MCF 10A (cell line): ENCODE measurements at regions of chr6 and their contacts with region 1.

Region 1: DNA sequence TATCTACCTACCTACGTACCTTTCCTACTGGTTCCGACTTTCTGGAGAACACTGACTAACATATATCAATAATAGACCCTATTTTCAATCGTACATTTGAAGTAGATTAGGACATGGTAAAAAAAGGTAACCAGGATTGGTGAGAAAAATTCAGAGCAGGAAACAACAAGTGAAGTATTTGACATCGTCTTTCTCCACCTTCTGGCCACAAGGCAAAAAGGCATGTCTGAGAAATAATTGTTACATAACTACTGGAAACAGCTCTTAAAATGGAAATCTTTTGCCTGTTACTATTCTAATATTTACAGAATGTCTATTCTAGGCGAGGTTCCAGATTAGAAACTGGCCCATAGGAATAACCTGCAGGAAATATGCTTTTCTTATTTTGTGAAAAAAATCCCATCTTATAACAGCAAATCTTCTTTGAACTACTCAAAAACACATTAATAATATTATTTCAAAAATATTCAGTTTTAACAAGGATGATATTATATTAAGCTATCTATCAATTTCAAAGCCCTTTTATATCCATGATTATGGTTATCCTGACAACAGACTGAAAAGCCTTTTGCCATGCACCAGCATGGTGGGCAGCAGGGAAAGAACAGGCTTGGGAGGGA is 80.8 kb downstream of the RCAN2 start:
- DNase-seq: peak; percentile 54
- H3K4me3 Mint-ChIP-seq: no peak overlapping the region
- H3K27ac Mint-ChIP-seq: no peak overlapping the region
- H3K4me1 Mint-ChIP-seq: no peaks in the 10 kb centered on the region
- H3K27me3 Mint-ChIP-seq: peaks cover 8% of the 10 kb centered on the region
- CTCF ChIP-seq: peak; percentile 75

Region 2: DNA sequence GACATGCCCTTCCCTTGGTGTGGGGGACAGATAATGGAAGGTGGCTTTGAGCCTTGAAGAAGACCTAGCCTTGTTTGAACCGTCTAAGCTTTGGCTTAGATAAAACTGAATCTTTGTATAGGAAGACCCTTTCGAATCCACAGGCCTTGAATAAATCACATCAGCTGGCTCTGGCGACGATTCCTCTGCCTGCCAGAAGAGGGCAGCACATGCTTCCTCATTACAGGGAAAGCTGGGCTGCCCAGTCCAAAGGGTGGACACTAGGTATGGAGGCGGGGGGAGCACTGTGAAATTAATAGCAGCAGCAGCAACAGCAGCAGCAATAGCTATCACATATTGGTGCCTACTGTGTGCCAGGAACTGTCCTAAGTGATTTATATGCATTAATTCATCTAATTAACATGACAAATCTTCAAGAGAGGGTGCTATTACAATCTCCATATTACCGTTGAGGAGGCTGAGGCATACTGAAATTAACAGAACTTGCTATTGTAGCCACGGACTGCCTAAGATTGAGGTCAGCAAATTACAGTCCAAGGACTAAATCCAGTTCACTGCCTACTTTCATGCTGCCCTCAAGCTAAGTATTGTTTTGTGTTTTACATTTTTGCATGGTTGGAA is 479.9 kb before region 1 on chr6:
- CTCF ChIA-PET with region 1: interaction called, 31 read pairs
- POLR2A ChIA-PET with region 1: interaction called, 3 read pairs
- intact Hi-C with region 1: loop called (anchors 1 kb)
- DNase-seq: peak; percentile 69
- H3K4me3 Mint-ChIP-seq: no peak overlapping the region
- H3K27ac Mint-ChIP-seq: no peak overlapping the region
- H3K4me1 Mint-ChIP-seq: no peaks in the 10 kb centered on the region
- H3K27me3 Mint-ChIP-seq: peaks cover 26% of the 10 kb centered on the region
- CTCF ChIP-seq: peak; percentile 93

Region 3: GRCh38 chr6:46042355-46042999 is 368.0 kb before region 1 on chr6:
- CTCF ChIA-PET with region 1: interaction called, 6 read pairs
- POLR2A ChIA-PET with region 1: no interaction called
- intact Hi-C with region 1: loop called (anchors 1 kb)
- DNase-seq: peak; percentile 70
- H3K4me3 Mint-ChIP-seq: no peak overlapping the region
- H3K27ac Mint-ChIP-seq: no peak overlapping the region
- H3K4me1 Mint-ChIP-seq: peaks cover 6% of the 10 kb centered on the region
- H3K27me3 Mint-ChIP-seq: no peaks in the 10 kb centered on the region
- CTCF ChIP-seq: peak; percentile 47

Region 4: GRCh38 chr6:46221222-46221793 is 189.1 kb before region 1 on chr6:
- CTCF ChIA-PET with region 1: interaction called, 192 read pairs
- POLR2A ChIA-PET with region 1: interaction called, 14 read pairs
- intact Hi-C with region 1: loop called (anchors 1 kb)
- DNase-seq: peak; percentile 47
- H3K4me3 Mint-ChIP-seq: no peak overlapping the region
- H3K27ac Mint-ChIP-seq: no peak overlapping the region
- H3K4me1 Mint-ChIP-seq: peaks cover 5% of the 10 kb centered on the region
- H3K27me3 Mint-ChIP-seq: no peaks in the 10 kb centered on the region
- CTCF ChIP-seq: peak; percentile 65

Region 5: GRCh38 chr6:46347669-46348068 is 62.8 kb before region 1 on chr6:
- CTCF ChIA-PET with region 1: no interaction called
- POLR2A ChIA-PET with region 1: no interaction called
- intact Hi-C with region 1: no loop called
- DNase-seq: no peak
- H3K4me3 Mint-ChIP-seq: no peak overlapping the region
- H3K27ac Mint-ChIP-seq: no peak overlapping the region
- H3K4me1 Mint-ChIP-seq: no peaks in the 10 kb centered on the region
- H3K27me3 Mint-ChIP-seq: peaks cover 20% of the 10 kb centered on the region
- CTCF ChIP-seq: no peak

Region 6: DNA sequence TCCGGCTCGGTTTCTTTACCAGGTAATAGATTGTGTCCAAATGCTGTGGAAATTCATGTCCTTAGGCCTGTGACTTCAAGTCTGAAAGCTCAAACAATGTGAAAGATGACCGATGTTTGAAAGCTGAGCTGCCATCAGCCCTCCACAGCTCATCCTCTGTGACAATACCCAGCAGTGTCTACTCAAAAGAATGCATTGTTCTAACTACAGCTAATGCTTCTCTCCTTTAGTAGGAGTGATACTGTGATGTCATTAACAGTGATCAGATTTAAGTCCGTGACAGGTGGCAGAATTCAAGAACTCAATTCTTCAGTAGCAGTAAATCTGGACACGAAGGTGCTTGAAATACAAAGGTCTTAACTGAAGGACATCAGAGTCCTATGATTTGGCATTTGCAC is 16.5 kb before region 1 on chr6:
- CTCF ChIA-PET with region 1: interaction called, 12 read pairs
- POLR2A ChIA-PET with region 1: no interaction called
- intact Hi-C with region 1: no loop called
- DNase-seq: no peak
- H3K4me3 Mint-ChIP-seq: no peak overlapping the region
- H3K27ac Mint-ChIP-seq: no peak overlapping the region
- H3K4me1 Mint-ChIP-seq: no peaks in the 10 kb centered on the region
- H3K27me3 Mint-ChIP-seq: peaks cover 41% of the 10 kb centered on the region
- CTCF ChIP-seq: no peak